Calu3 (cell line): ENCODE measurements at regions of chr2 and their contacts with region 1.

Region 1: GRCh38 chr2:217713395-217714286 is 289.2 kb downstream of the TNS1 start:
- DNase-seq: peak; percentile 92
- H3K4me3 Mint-ChIP-seq: peak overlapping the region; percentile 14
- H3K27ac Mint-ChIP-seq: peak overlapping the region; percentile 85
- H3K4me1 Mint-ChIP-seq: peaks cover 31% of the 10 kb centered on the region
- H3K27me3 Mint-ChIP-seq: no peaks in the 10 kb centered on the region
- CTCF ChIP-seq: peak; percentile 97

Region 2: DNA sequence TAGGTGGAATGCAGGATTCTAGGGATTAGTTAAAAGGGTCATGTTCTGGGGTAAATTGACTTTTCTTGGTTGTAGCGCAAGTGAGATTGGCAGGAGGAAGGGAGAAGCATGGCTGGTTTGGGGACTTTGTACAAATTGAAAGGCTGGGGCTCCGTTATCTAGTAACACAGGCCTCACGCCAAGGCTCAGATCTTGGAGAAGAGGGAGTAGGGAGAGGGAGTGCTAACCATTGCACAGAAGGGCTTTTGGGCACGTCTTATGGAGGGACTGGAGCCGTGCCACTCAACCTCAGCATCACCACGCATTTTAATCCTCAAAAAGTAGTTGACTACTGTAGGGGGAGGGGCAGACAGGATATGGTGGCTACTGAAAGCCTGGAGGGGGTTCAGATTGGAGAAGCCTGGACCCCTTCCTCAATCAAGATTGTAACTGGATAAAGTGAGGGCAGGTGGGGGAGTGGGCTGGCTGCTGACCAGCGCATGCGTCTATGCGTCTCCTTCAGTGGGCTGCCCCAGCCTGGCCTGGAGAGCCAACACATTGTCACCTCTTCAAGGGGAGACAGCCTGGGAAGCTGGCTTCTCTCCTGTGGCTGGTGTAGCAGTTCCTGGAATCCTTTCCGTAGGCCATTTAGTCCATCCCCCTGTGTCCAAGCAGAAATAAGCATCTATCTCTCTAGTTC is 1032.6 kb before region 1 on chr2:
- CTCF ChIA-PET with region 1: interaction called, 10 read pairs
- intact Hi-C with region 1: loop called (anchors 1 kb)
- DNase-seq: no peak
- H3K4me3 Mint-ChIP-seq: no peak overlapping the region
- H3K27ac Mint-ChIP-seq: no peak overlapping the region
- H3K4me1 Mint-ChIP-seq: peaks cover 28% of the 10 kb centered on the region
- H3K27me3 Mint-ChIP-seq: peaks cover 8% of the 10 kb centered on the region
- CTCF ChIP-seq: no peak

Region 3: DNA sequence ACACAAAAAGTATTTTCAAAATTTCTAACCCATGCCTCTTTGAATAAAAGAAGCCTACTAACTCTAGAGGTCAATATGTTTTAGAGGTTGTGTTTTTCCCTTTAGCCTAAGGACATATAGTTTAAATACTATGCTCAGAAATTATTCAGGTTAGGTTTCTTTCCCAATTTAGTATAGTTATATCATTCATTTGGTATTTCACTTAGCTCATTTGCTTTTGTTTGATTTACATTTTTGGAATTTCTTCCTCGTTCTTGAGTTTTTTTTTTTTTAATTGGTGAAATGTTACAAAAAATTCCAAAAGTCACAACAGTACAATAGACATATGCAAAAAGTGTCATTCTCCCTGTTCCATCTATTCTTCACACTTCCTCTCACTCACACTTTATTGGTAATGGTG is 482.4 kb before region 1 on chr2:
- CTCF ChIA-PET with region 1: no interaction called
- intact Hi-C with region 1: loop called (anchors 5 kb)
- DNase-seq: no peak
- H3K4me3 Mint-ChIP-seq: no peak overlapping the region
- H3K27ac Mint-ChIP-seq: peak overlapping the region; percentile 90
- H3K4me1 Mint-ChIP-seq: peaks cover 56% of the 10 kb centered on the region
- H3K27me3 Mint-ChIP-seq: no peaks in the 10 kb centered on the region
- CTCF ChIP-seq: no peak

Region 4: DNA sequence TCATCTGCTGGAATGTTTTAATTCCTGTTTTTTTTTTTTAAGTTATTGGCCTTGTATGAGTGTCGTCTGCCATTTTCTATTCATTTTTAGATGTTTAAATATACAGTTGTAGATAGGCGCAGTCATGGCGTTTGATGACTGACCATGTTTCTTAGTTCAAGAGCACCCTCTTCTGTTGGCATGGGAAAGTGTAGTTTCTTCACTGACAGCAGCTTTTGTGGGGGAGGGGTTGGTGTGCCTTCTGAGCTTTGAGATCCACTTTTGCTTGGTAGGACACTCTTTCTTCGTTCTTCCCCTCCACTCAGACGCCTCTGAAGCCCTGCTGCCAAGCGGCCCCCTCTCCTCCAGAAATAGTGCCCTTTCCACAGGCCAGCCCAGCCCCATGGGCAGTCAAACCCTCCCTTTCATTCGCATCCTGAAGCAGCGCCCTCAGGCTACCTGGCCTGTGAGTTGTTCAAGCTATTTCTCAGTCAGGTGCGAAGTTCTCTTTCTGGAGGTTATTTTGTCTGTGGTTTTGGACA is 202.8 kb before region 1 on chr2:
- CTCF ChIA-PET with region 1: interaction called, 5 read pairs
- intact Hi-C with region 1: loop called (anchors 2 kb)
- DNase-seq: peak; percentile 76
- H3K4me3 Mint-ChIP-seq: no peak overlapping the region
- H3K27ac Mint-ChIP-seq: peak overlapping the region; percentile 90
- H3K4me1 Mint-ChIP-seq: peaks cover 39% of the 10 kb centered on the region
- H3K27me3 Mint-ChIP-seq: no peaks in the 10 kb centered on the region
- CTCF ChIP-seq: peak; percentile 79

Region 5: GRCh38 chr2:217691920-217692666 is 21.5 kb before region 1 on chr2:
- CTCF ChIA-PET with region 1: no interaction called
- intact Hi-C with region 1: no loop called
- DNase-seq: no peak
- H3K4me3 Mint-ChIP-seq: no peak overlapping the region
- H3K27ac Mint-ChIP-seq: no peak overlapping the region
- H3K4me1 Mint-ChIP-seq: no peaks in the 10 kb centered on the region
- H3K27me3 Mint-ChIP-seq: no peaks in the 10 kb centered on the region
- CTCF ChIP-seq: no peak

Region 6: GRCh38 chr2:217775920-217776492 is 62.4 kb after region 1 on chr2:
- CTCF ChIA-PET with region 1: no interaction called
- intact Hi-C with region 1: no loop called
- DNase-seq: no peak
- H3K4me3 Mint-ChIP-seq: no peak overlapping the region
- H3K27ac Mint-ChIP-seq: no peak overlapping the region
- H3K4me1 Mint-ChIP-seq: no peaks in the 10 kb centered on the region
- H3K27me3 Mint-ChIP-seq: peaks cover 34% of the 10 kb centered on the region
- CTCF ChIP-seq: no peak

Region 7: GRCh38 chr2:217789003-217789735 is 75.5 kb after region 1 on chr2:
- CTCF ChIA-PET with region 1: no interaction called
- intact Hi-C with region 1: no loop called
- DNase-seq: peak; percentile 83
- H3K4me3 Mint-ChIP-seq: no peak overlapping the region
- H3K27ac Mint-ChIP-seq: no peak overlapping the region
- H3K4me1 Mint-ChIP-seq: no peaks in the 10 kb centered on the region
- H3K27me3 Mint-ChIP-seq: peaks cover 39% of the 10 kb centered on the region
- CTCF ChIP-seq: peak; percentile 98